PC-9 (cell line): ENCODE measurements at regions of chr22 and their contacts with region 1.

Region 1: DNA sequence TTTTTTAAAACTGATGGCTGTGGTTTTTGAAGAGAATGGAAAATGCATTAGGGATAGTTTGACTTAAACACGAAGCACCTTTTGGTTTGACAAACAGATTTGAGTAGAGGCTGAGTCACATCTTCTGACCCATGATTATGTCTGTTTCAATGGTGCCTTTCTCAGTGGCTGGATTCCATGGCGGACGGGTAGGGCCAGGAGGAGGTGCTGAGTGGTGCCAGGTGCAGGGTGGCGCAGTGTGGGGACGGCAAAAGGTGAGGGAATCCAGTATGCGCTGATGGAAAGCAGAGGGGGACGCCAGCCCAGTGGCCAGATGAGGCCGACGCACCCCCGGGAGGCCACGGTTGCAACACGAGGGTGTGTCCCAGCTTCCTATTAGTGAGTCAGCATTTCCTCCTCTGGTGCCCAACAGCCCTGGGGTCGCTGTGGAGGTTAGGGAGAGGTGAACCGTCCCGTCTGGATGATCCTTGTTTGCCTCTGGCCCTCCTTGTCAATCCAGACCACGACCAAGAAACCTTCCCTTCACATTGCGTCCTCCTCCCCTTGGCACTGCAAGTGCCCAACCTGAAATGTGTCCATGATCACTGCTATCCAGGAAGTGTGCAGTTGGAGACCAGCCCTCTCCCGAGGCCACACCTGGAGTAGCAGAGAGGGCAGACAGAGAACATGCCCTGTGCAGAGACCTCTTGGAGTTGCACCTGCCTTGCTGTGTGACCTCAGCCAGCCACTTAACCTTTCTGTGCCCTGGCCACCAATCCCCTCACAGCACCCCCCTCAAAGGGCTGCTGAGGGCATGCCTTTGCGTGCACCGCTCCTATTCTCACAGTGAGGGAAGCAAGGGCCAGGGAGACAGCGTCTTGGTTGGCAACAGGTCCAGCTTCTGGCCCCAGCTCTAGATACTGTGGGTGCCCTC is 32.5 kb upstream of the ATXN10 start:
- DNase-seq: peak; percentile 94 to 97
- H3K4me3 ChIP-seq: peak overlapping the region; percentile 24; the same call in 1 of the 2 replicates
- H3K27ac ChIP-seq: peak overlapping the region; percentile 95
- H3K4me1 ChIP-seq: peaks cover 49% of the 10 kb centered on the region
- H3K27me3 ChIP-seq: no peaks in the 10 kb centered on the region
- CTCF ChIP-seq: no peak

Region 2: DNA sequence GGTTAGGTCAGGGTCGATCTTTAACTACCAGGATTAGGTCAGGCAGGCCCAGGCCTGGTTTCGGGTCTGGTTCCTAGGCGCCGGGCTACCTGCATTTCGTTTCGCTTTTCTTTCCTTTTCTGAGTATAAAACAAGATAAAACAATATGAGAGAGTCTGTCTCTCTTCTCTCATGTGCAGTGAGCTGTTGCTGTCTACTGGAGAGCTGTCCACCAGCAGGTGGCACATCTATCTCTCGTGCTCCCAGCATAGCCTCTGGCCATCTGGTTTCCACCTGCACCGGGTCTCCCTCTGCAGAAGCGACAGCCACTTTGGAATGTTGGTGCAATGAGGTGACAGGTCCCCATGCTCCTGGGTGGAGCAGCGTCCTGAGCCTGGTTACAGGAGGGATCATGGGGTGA is 198.0 kb before region 1 on chr22:
- CTCF ChIA-PET with region 1: no interaction called
- POLR2A ChIA-PET with region 1: no interaction called
- intact Hi-C with region 1: loop called (anchors 10 kb)
- DNase-seq: peak; percentile 77 to 81
- H3K4me3 ChIP-seq: peak overlapping the region; percentile 21; the same call in 1 of the 2 replicates
- H3K27ac ChIP-seq: peak overlapping the region; percentile 17; the same call in 1 of the 2 replicates
- H3K4me1 ChIP-seq: peaks cover 48% of the 10 kb centered on the region
- H3K27me3 ChIP-seq: no peaks in the 10 kb centered on the region
- CTCF ChIP-seq: peak; percentile 80

Region 3: GRCh38 chr22:45597460-45598192 is 41.5 kb before region 1 on chr22:
- CTCF ChIA-PET with region 1: no interaction called
- POLR2A ChIA-PET with region 1: no interaction called
- intact Hi-C with region 1: loop called (anchors 2 kb)
- DNase-seq: peak; percentile 74 to 88
- H3K4me3 ChIP-seq: no peak overlapping the region
- H3K27ac ChIP-seq: peak overlapping the region; percentile 22; the same call in 1 of the 2 replicates
- H3K4me1 ChIP-seq: peaks cover 18% of the 10 kb centered on the region
- H3K27me3 ChIP-seq: no peaks in the 10 kb centered on the region
- CTCF ChIP-seq: no peak

Region 4: GRCh38 chr22:45602824-45603630 is 36.1 kb before region 1 on chr22:
- CTCF ChIA-PET with region 1: no interaction called
- POLR2A ChIA-PET with region 1: no interaction called
- intact Hi-C with region 1: loop called (anchors 1 kb)
- DNase-seq: peak in 1 of 2 experiments; percentile 46
- H3K4me3 ChIP-seq: no peak overlapping the region
- H3K27ac ChIP-seq: no peak overlapping the region
- H3K4me1 ChIP-seq: peaks cover 43% of the 10 kb centered on the region
- H3K27me3 ChIP-seq: no peaks in the 10 kb centered on the region
- CTCF ChIP-seq: no peak

Region 5: GRCh38 chr22:45626198-45626651 is 12.9 kb before region 1 on chr22:
- CTCF ChIA-PET with region 1: no interaction called
- POLR2A ChIA-PET with region 1: no interaction called
- intact Hi-C with region 1: loop called (anchors 1 kb)
- DNase-seq: peak; percentile 88 to 97
- H3K4me3 ChIP-seq: peak overlapping the region; percentile 50
- H3K27ac ChIP-seq: peak overlapping the region; percentile 91
- H3K4me1 ChIP-seq: peaks cover 27% of the 10 kb centered on the region
- H3K27me3 ChIP-seq: no peaks in the 10 kb centered on the region
- CTCF ChIP-seq: no peak

Region 6: GRCh38 chr22:45688606-45689080 is 49.6 kb after region 1 on chr22:
- CTCF ChIA-PET with region 1: no interaction called
- POLR2A ChIA-PET with region 1: interaction called, 4 read pairs
- intact Hi-C with region 1: loop called (anchors 2 kb)
- DNase-seq: peak; percentile 84 to 100
- H3K4me3 ChIP-seq: peak overlapping the region; percentile 32; the same call in 1 of the 2 replicates
- H3K27ac ChIP-seq: peak overlapping the region; percentile 97
- H3K4me1 ChIP-seq: peaks cover 97% of the 10 kb centered on the region
- H3K27me3 ChIP-seq: no peaks in the 10 kb centered on the region
- CTCF ChIP-seq: no peak